B cell (primary cell): ENCODE measurements at regions of chr16 and their contacts with region 1.

Region 1: GRCh38 chr16:29700253-29700987 is 21.4 kb downstream of the QPRT start:
- DNase-seq: peak; percentile 80
- ATAC-seq: peak; percentile 16
- H3K4me3 ChIP-seq: no peak overlapping the region
- H3K4me3 Mint-ChIP-seq: peak overlapping the region; percentile 60
- H3K27ac ChIP-seq: no peak overlapping the region
- H3K27ac Mint-ChIP-seq: peak overlapping the region; percentile 82
- H3K4me1 ChIP-seq: peaks cover 24 to 33% of the 10 kb centered on the region in 2 donors
- H3K4me1 Mint-ChIP-seq: peaks cover 30% of the 10 kb centered on the region
- H3K27me3 ChIP-seq: no peaks in the 10 kb centered on the region
- H3K27me3 Mint-ChIP-seq: no peaks in the 10 kb centered on the region
- CTCF ChIP-seq: peak; percentile 84

Region 2: DNA sequence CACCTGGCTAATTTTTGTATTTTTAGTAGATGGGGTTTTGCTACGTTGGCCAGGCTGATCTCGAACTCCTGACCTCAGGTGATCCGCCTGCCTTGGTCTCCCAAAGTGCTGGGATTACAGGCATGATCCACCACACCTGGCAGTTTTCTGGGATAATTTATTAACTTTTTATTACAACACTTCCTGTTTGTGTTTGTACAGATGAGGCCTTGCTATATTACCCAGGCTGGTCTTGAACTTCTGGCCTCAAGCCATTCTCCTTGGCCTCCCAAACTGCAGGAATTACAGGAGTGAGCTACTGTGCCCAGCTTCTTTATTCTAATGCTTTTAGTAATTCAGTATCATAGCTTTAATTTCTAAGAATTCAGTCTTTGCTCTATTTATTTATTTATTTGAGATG is 53.5 kb before region 1 on chr16:
- CTCF ChIA-PET with region 1: interaction called, 11 read pairs
- POLR2A ChIA-PET with region 1: interaction called, 4 read pairs
- intact Hi-C with region 1: loop called (anchors 5 kb)
- DNase-seq: no peak
- ATAC-seq: no peak
- H3K4me3 ChIP-seq: no peak overlapping the region
- H3K4me3 Mint-ChIP-seq: no peak overlapping the region
- H3K27ac ChIP-seq: no peak overlapping the region
- H3K27ac Mint-ChIP-seq: no peak overlapping the region
- H3K4me1 ChIP-seq: peaks cover 20 to 34% of the 10 kb centered on the region in 2 donors
- H3K4me1 Mint-ChIP-seq: peaks cover 29% of the 10 kb centered on the region
- H3K27me3 ChIP-seq: no peaks in the 10 kb centered on the region
- H3K27me3 Mint-ChIP-seq: no peaks in the 10 kb centered on the region
- CTCF ChIP-seq: no peak

Region 3: DNA sequence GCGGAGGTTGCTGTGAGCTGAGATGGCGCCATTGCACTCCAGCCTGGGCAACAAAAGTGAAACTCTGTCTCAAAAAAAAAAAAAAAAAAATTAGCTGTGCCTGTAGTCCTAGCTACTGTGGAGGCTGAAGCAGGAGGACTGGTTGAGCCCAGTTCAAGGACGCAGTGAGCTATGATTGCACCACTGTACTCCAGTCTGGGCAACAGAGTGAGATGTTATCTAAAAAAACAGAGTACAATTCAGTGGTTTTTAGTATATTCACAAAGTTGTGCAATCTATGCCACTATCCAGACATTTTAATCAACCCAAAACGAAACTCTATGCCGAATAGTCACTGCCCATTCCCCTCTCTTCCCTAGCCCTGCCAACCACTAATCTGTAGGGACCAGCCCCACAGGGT is 20.3 kb after region 1 on chr16:
- CTCF ChIA-PET with region 1: interaction called, 63 read pairs
- POLR2A ChIA-PET with region 1: interaction called, 3 read pairs
- intact Hi-C with region 1: loop called (anchors 1 kb)
- DNase-seq: no peak
- ATAC-seq: no peak
- H3K4me3 ChIP-seq: no peak overlapping the region
- H3K4me3 Mint-ChIP-seq: peak overlapping the region; percentile 23
- H3K27ac ChIP-seq: no peak overlapping the region
- H3K27ac Mint-ChIP-seq: no peak overlapping the region
- H3K4me1 ChIP-seq: peaks cover 0 to 3% of the 10 kb centered on the region in 2 donors
- H3K4me1 Mint-ChIP-seq: peaks cover 6% of the 10 kb centered on the region
- H3K27me3 ChIP-seq: no peaks in the 10 kb centered on the region
- H3K27me3 Mint-ChIP-seq: no peaks in the 10 kb centered on the region
- CTCF ChIP-seq: no peak

Region 4: GRCh38 chr16:29784901-29785500 is 84.6 kb after region 1 on chr16:
- CTCF ChIA-PET with region 1: interaction called, 25 read pairs
- POLR2A ChIA-PET with region 1: interaction called, 15 read pairs
- intact Hi-C with region 1: loop called (anchors 2 kb)
- DNase-seq: peak; percentile 78
- ATAC-seq: peak; percentile 95
- H3K4me3 ChIP-seq: peak overlapping the region in 4 of 5 experiments; percentile 4 to 49 (median 25)
- H3K4me3 Mint-ChIP-seq: peak overlapping the region; percentile 81
- H3K27ac ChIP-seq: no peak overlapping the region
- H3K27ac Mint-ChIP-seq: peak overlapping the region; percentile 50
- H3K4me1 ChIP-seq: peaks cover 13 to 23% of the 10 kb centered on the region in 2 donors
- H3K4me1 Mint-ChIP-seq: peaks cover 15% of the 10 kb centered on the region
- H3K27me3 ChIP-seq: no peaks in the 10 kb centered on the region
- H3K27me3 Mint-ChIP-seq: no peaks in the 10 kb centered on the region
- CTCF ChIP-seq: peak; percentile 81

Region 5: GRCh38 chr16:29815793-29816693 is 115.6 kb after region 1 on chr16 and contains the start of gene PAGR1:
- CTCF ChIA-PET with region 1: interaction called, 29 read pairs
- POLR2A ChIA-PET with region 1: interaction called, 18 read pairs
- intact Hi-C with region 1: loop called (anchors 1 kb)
- DNase-seq: peak; percentile 100
- ATAC-seq: peak; percentile 76
- H3K4me3 ChIP-seq: peak within 1 kb of the TSS; percentile 73 to 93 (median 84)
- H3K4me3 Mint-ChIP-seq: peak within 1 kb of the TSS; percentile 97
- H3K27ac ChIP-seq: peak within 1 kb of the TSS; percentile 88
- H3K27ac Mint-ChIP-seq: peak within 1 kb of the TSS; percentile 98
- H3K4me1 ChIP-seq: peaks cover 40 to 60% of the 10 kb centered on the region in 2 donors
- H3K4me1 Mint-ChIP-seq: peaks cover 65% of the 10 kb centered on the region
- H3K27me3 ChIP-seq: peaks cover 0 to 13% (median 5%) of the 10 kb centered on the region in 4 experiments
- H3K27me3 Mint-ChIP-seq: no peaks in the 10 kb centered on the region
- CTCF ChIP-seq: peak; percentile 97
- total RNA-seq, gene PAGR1: 26.7 and 28.4 TPM in 2 replicates

Region 6: DNA sequence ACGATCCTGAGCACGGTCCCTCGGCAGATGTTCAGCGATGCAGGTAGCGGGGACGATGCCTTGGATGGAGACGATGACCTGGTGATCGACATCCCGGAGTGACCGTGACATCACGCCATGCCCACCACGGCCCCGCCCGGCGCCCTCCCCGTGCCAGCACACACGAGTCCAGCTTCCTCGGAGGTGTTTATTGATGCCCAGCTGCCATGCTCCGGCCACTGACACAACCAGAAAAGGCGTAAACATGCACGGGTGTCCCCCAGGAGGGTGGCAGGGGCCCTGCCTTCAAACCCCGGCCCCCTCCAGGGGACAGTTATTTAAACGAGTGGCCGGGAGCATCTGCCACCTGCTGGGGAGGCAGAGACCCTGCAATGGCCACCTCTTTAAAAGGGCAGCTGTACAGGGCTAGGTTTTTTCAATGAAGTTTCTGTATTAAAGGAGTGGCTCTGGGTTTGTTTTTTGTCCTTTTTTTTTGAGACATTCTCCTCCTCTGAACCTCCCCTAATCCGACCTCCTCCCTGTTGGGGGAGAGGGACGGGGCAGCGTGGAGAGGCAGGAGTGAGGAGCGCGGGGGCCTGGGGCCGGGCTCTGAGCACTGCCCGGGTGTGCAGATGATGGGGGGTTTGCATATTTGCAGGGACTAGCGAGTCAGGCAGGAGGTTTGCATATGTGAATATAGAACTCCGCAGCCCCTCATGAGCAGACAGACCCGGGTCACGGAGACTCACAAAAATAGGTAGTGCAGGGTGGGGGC is 305.1 kb after region 1 on chr16:
- CTCF ChIA-PET with region 1: interaction called, 17 read pairs
- POLR2A ChIA-PET with region 1: interaction called, 4 read pairs
- intact Hi-C with region 1: loop called (anchors 1 kb)
- DNase-seq: peak; percentile 62
- ATAC-seq: peak; percentile 74
- H3K4me3 ChIP-seq: no peak overlapping the region
- H3K4me3 Mint-ChIP-seq: no peak overlapping the region
- H3K27ac ChIP-seq: no peak overlapping the region
- H3K27ac Mint-ChIP-seq: no peak overlapping the region
- H3K4me1 ChIP-seq: peaks cover 10 to 19% of the 10 kb centered on the region in 2 donors
- H3K4me1 Mint-ChIP-seq: peaks cover 10% of the 10 kb centered on the region
- H3K27me3 ChIP-seq: peaks cover 0 to 14% (median 4%) of the 10 kb centered on the region in 4 experiments
- H3K27me3 Mint-ChIP-seq: peaks cover 12% of the 10 kb centered on the region
- CTCF ChIP-seq: peak; percentile 80